Activated CD4-positive, alpha-beta T cell treated with anti-CD3 and anti-CD28 coated beads, Interleukin-2, amount 10 ng/mL, durations not matched to agents 24 days and 14 days (primary cell): ENCODE measurements at regions of chr4 and their contacts with region 1.

Region 1: GRCh38 chr4:67581208-67581857 is 22.8 kb downstream of the STAP1 start:
- DNase-seq: peak; percentile 83
- H3K4me3 Mint-ChIP-seq: peak overlapping the region; percentile 79
- H3K27ac Mint-ChIP-seq: peak overlapping the region; percentile 93
- H3K4me1 Mint-ChIP-seq: peaks cover 27% of the 10 kb centered on the region
- H3K27me3 Mint-ChIP-seq: no peaks in the 10 kb centered on the region

Region 2: GRCh38 chr4:67522851-67523671 is 58.3 kb before region 1 on chr4:
- intact Hi-C with region 1: loop called (anchors 2 kb)
- DNase-seq: peak; percentile 69
- H3K4me3 Mint-ChIP-seq: peak overlapping the region; percentile 66
- H3K27ac Mint-ChIP-seq: peak overlapping the region; percentile 97
- H3K4me1 Mint-ChIP-seq: peaks cover 55% of the 10 kb centered on the region
- H3K27me3 Mint-ChIP-seq: no peaks in the 10 kb centered on the region

Region 3: DNA sequence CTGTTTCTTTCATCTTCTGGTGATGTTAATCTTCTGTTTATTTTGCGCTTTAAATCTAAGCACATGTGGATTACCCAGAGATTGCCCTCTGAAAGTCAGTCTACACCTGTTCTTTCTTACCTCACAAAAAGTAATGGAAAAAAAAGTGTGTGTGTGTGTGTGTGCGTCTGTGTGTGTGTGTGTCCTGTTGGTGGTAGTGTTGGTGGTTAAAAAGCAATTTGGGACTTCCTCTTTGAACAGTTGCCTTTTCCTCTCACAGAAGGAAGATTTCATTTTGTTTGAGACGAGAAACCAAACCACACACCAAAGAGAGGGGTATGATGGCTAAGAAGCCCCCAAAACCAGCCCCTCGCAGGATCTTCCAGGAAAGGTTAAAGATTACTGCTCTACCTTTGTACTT is 22.8 kb before region 1 on chr4 and contains the start of gene STAP1:
- intact Hi-C with region 1: loop called (anchors 1 kb)
- DNase-seq: peak; percentile 87
- H3K4me3 Mint-ChIP-seq: peak within 1 kb of the TSS; percentile 84
- H3K27ac Mint-ChIP-seq: peak within 1 kb of the TSS; percentile 88
- H3K4me1 Mint-ChIP-seq: peaks cover 37% of the 10 kb centered on the region
- H3K27me3 Mint-ChIP-seq: no peaks in the 10 kb centered on the region
- total RNA-seq, gene STAP1: 15.0 and 15.6 TPM in 2 replicates

Region 4: DNA sequence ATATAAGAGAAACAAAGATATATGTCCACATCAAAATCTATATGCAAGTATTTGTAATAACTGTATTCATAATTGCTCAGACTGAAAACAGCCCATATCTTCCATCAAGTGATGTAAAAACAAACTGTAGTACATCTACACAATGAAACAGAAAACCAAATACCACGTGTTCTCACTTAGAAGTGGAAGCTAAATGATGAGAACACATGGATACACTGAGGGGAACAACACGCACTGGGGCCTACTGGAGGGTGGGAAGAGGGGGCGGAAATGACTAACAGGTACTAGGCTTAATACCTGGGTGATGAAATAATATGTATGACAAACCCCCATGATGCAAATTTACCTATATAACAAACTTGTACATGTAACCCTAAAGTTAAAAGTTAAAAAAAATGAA is 77.0 kb after region 1 on chr4:
- intact Hi-C with region 1: loop called (anchors 5 kb)
- DNase-seq: no peak
- H3K4me3 Mint-ChIP-seq: no peak overlapping the region
- H3K27ac Mint-ChIP-seq: peak overlapping the region; percentile 61
- H3K4me1 Mint-ChIP-seq: peaks cover 10% of the 10 kb centered on the region
- H3K27me3 Mint-ChIP-seq: no peaks in the 10 kb centered on the region

Region 5: DNA sequence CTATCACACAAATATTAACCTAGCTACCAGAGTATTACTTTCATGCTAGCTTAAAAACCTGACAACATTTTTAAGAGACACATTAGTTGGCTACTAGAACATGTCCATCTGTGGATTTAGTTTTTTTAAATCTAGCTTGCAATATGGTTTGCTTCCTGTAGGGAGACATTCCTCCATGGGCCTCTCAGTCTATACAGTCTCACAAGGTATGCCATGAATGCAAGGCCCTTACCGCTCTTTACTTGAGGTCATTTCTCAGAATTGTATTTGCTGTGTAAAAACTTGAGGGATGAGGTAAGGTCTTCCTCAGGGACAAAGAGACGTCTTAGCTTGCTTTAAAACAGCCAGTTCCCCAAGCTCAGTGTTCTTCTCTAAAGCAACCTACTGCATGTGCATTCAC is 92.8 kb after region 1 on chr4:
- intact Hi-C with region 1: no loop called
- DNase-seq: no peak
- H3K4me3 Mint-ChIP-seq: no peak overlapping the region
- H3K27ac Mint-ChIP-seq: no peak overlapping the region
- H3K4me1 Mint-ChIP-seq: peaks cover 9% of the 10 kb centered on the region
- H3K27me3 Mint-ChIP-seq: no peaks in the 10 kb centered on the region

Region 6: GRCh38 chr4:68249434-68249833 is 668.1 kb after region 1 on chr4:
- intact Hi-C with region 1: loop called (anchors 5 kb)
- DNase-seq: no peak
- H3K4me3 Mint-ChIP-seq: peak overlapping the region; percentile 64
- H3K27ac Mint-ChIP-seq: peak overlapping the region; percentile 93
- H3K4me1 Mint-ChIP-seq: peaks cover 10% of the 10 kb centered on the region
- H3K27me3 Mint-ChIP-seq: no peaks in the 10 kb centered on the region